Head of caudate nucleus (tissue), 42 donors: ENCODE measurements at regions of chr3 and their contacts with region 1.

Region 1: GRCh38 chr3:33586402-33586801 is 131.7 kb downstream of the CLASP2 start:
- DNase-seq: no peak

Region 2: GRCh38 chr3:32856355-32856889 is 730.0 kb before region 1 on chr3:
- intact Hi-C with region 1: no loop called
- DNase-seq: no peak

Region 3: DNA sequence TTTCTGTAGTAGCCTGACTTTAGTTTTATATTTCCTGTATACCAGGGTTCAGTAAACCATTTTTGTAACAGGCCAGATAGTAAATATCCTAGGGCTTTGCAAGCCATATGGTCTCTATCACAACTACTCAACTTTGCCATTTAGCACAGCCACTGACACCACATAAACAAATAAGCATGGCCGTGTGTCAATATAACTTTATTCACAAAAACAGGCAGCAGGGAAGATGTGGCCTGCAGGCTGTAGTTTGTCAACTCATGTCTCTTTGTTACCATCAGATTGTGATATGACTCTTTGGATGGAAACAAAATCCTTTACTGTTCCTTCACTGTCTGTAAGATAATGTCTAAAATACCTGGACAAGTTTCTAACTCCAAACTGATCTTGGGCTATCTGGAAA is 22.9 kb before region 1 on chr3:
- intact Hi-C with region 1: loop called (anchors 2 kb)
- DNase-seq: no peak